CD8-positive, alpha-beta T cell (primary cell): ENCODE measurements at regions of chr13 and their contacts with region 1.

Region 1: GRCh38 chr13:23375001-23375971 is 58.2 kb downstream of the SACS start:
- DNase-seq: peak; percentile 95 to 99 (median 97)
- ATAC-seq: peak; percentile 87
- H3K4me3 ChIP-seq: peak overlapping the region; percentile 52 to 69
- H3K4me3 Mint-ChIP-seq: peak overlapping the region; percentile 81
- H3K27ac ChIP-seq: peak overlapping the region; percentile 42 to 68
- H3K27ac Mint-ChIP-seq: peak overlapping the region; percentile 58
- H3K4me1 ChIP-seq: peaks cover 37% of the 10 kb centered on the region
- H3K4me1 Mint-ChIP-seq: peaks cover 57% of the 10 kb centered on the region
- H3K27me3 ChIP-seq: no peaks in the 10 kb centered on the region
- H3K27me3 Mint-ChIP-seq: no peaks in the 10 kb centered on the region
- CTCF ChIP-seq: peak; percentile 37

Region 2: GRCh38 chr13:21458813-21459701 is 1916.2 kb before region 1 on chr13 and contains the start of gene ZDHHC20:
- CTCF ChIA-PET with region 1: no interaction called
- POLR2A ChIA-PET with region 1: no interaction called
- intact Hi-C with region 1: loop called in 1 of 2 experiments (anchors 5 kb)
- DNase-seq: peak; percentile 77 to 96 (median 90)
- ATAC-seq: peak; percentile 93
- H3K4me3 ChIP-seq: peak within 1 kb of the TSS; percentile 69 to 78
- H3K4me3 Mint-ChIP-seq: peak within 1 kb of the TSS; percentile 95
- H3K27ac ChIP-seq: peak within 1 kb of the TSS; percentile 80 to 89
- H3K27ac Mint-ChIP-seq: peak within 1 kb of the TSS; percentile 96
- H3K4me1 ChIP-seq: peaks cover 15% of the 10 kb centered on the region
- H3K4me1 Mint-ChIP-seq: peaks cover 45% of the 10 kb centered on the region
- H3K27me3 ChIP-seq: no peaks in the 10 kb centered on the region
- H3K27me3 Mint-ChIP-seq: no peaks in the 10 kb centered on the region
- CTCF ChIP-seq: no peak
- total RNA-seq, gene ZDHHC20: 81.0 to 81.1 TPM

Region 3: GRCh38 chr13:23466144-23467002 is 91.1 kb after region 1 on chr13:
- CTCF ChIA-PET with region 1: no interaction called
- POLR2A ChIA-PET with region 1: no interaction called
- intact Hi-C with region 1: loop called in 1 of 2 experiments (anchors 5 kb)
- DNase-seq: peak; percentile 26 to 77 (median 55)
- ATAC-seq: peak; percentile 85
- H3K4me3 ChIP-seq: peak overlapping the region; percentile 49 to 53
- H3K4me3 Mint-ChIP-seq: peak overlapping the region; percentile 82
- H3K27ac ChIP-seq: no peak overlapping the region
- H3K27ac Mint-ChIP-seq: peak overlapping the region; percentile 11
- H3K4me1 ChIP-seq: no peaks in the 10 kb centered on the region
- H3K4me1 Mint-ChIP-seq: peaks cover 5% of the 10 kb centered on the region
- H3K27me3 ChIP-seq: no peaks in the 10 kb centered on the region
- H3K27me3 Mint-ChIP-seq: peaks cover 13% of the 10 kb centered on the region
- CTCF ChIP-seq: peak; percentile 42

Region 4: DNA sequence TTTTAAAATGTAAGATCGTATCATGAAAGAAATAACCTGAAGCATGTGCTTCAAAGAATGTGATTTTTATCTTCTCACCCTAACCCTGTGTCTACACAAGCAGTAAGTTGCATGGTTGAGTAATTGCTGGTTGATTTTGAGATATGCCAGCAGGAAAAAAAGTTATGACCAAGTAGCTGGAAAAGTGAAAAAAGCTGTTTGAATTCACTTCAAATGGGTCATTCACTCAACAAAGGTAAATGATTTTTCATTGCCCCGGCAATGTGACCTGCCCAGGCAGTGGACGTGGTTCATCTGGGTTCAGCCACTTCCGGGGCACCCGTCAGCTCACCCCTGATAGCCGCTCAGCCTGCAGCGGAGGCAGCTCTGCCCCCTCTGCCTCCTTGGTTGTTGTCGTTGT is 213.4 kb after region 1 on chr13:
- CTCF ChIA-PET with region 1: no interaction called
- POLR2A ChIA-PET with region 1: no interaction called
- intact Hi-C with region 1: no loop called
- DNase-seq: no peak
- ATAC-seq: no peak
- H3K4me3 ChIP-seq: no peak overlapping the region
- H3K4me3 Mint-ChIP-seq: no peak overlapping the region
- H3K27ac ChIP-seq: no peak overlapping the region
- H3K27ac Mint-ChIP-seq: no peak overlapping the region
- H3K4me1 ChIP-seq: no peaks in the 10 kb centered on the region
- H3K4me1 Mint-ChIP-seq: no peaks in the 10 kb centered on the region
- H3K27me3 ChIP-seq: peaks cover 0 to 2% of the 10 kb centered on the region in 2 experiments
- H3K27me3 Mint-ChIP-seq: peaks cover 20% of the 10 kb centered on the region
- CTCF ChIP-seq: no peak

Region 5: DNA sequence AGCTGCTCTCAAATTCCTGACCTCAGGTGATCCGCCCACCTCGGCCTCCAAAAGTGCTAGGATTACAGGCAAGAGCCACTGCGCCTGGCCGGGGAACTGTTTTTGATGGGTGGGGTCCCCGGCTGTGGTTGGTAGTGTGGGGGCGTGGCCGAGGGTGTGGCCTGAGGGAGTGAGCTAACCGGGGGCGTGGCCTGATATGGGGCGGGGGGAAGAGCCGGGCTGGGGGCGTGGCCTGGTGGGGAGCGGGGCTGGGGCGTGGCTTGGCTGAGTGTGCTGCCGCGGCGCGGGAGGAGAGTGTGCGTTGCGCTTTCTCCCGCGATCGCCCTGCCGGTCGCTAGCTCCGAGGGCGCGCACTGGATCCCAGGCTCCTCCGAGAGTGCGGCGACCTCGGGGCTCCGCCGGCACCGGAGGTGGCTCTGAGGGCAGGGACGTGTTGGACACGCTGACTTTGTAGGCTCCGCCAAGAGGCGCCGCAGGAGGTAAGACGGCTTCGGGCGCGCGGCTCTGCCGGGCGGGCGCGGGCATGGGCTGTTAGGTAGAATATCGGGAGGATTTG is 785.2 kb after region 1 on chr13 and contains the start of gene SPATA13:
- CTCF ChIA-PET with region 1: no interaction called
- POLR2A ChIA-PET with region 1: no interaction called
- intact Hi-C with region 1: loop called (anchors 1 to 2 kb)
- DNase-seq: peak; percentile 87 to 97 (median 94)
- ATAC-seq: peak; percentile 96
- H3K4me3 ChIP-seq: peak within 1 kb of the TSS; percentile 87 to 89
- H3K4me3 Mint-ChIP-seq: peak within 1 kb of the TSS; percentile 87
- H3K27ac ChIP-seq: peak within 1 kb of the TSS; percentile 29 to 56
- H3K27ac Mint-ChIP-seq: peak within 1 kb of the TSS; percentile 72
- H3K4me1 ChIP-seq: peaks cover 16% of the 10 kb centered on the region
- H3K4me1 Mint-ChIP-seq: peaks cover 26% of the 10 kb centered on the region
- H3K27me3 ChIP-seq: no peaks in the 10 kb centered on the region
- H3K27me3 Mint-ChIP-seq: no peaks in the 10 kb centered on the region
- CTCF ChIP-seq: no peak
- total RNA-seq, gene SPATA13: 102 to 106 TPM

Region 6: DNA sequence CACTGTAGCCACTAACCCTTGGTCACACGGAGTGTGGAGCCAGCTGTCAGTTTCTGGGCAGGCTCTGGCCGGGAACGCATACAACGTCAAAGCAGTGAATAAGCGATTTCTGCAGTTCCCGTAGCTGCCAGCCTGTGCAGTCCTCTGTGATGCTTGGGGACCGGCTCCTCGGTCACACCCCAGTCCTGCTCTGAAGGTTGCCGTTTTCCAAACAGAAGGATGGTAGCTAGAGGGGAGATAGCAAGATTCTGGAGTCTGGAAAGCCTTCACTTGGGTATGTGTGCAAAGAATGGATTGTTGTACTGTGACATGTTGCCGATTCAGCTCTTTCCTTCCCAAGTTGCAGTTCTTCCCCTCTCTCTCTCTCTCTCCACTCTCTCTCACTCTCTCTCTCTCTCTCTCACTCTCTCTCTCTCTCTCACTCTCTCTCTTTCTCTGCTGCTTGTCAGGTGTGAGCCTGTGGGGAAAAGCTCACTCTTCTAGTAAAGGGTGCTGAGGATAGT is 895.4 kb after region 1 on chr13:
- CTCF ChIA-PET with region 1: no interaction called
- POLR2A ChIA-PET with region 1: no interaction called
- intact Hi-C with region 1: loop called (anchors 5 to 10 kb)
- DNase-seq: peak in 8 of 9 experiments; percentile 40 to 86 (median 68)
- ATAC-seq: peak; percentile 32
- H3K4me3 ChIP-seq: peak overlapping the region; percentile 32 to 54
- H3K4me3 Mint-ChIP-seq: peak overlapping the region; percentile 85
- H3K27ac ChIP-seq: peak overlapping the region; percentile 81 to 94
- H3K27ac Mint-ChIP-seq: peak overlapping the region; percentile 99
- H3K4me1 ChIP-seq: peaks cover 91% of the 10 kb centered on the region
- H3K4me1 Mint-ChIP-seq: peaks cover 94% of the 10 kb centered on the region
- H3K27me3 ChIP-seq: no peaks in the 10 kb centered on the region
- H3K27me3 Mint-ChIP-seq: no peaks in the 10 kb centered on the region
- CTCF ChIP-seq: no peak

Region 7: GRCh38 chr13:25301347-25302047 is 1926.2 kb after region 1 on chr13 and contains the start of gene NUP58:
- CTCF ChIA-PET with region 1: no interaction called
- POLR2A ChIA-PET with region 1: no interaction called
- intact Hi-C with region 1: loop called (anchors 5 to 10 kb)
- DNase-seq: peak; percentile 83 to 98 (median 93)
- ATAC-seq: peak; percentile 99
- H3K4me3 ChIP-seq: peak within 1 kb of the TSS; percentile 81 to 84
- H3K4me3 Mint-ChIP-seq: peak within 1 kb of the TSS; percentile 95
- H3K27ac ChIP-seq: peak within 1 kb of the TSS; percentile 83 to 92
- H3K27ac Mint-ChIP-seq: peak within 1 kb of the TSS; percentile 94
- H3K4me1 ChIP-seq: peaks cover 18% of the 10 kb centered on the region
- H3K4me1 Mint-ChIP-seq: peaks cover 46% of the 10 kb centered on the region
- H3K27me3 ChIP-seq: peaks cover 0 to 5% of the 10 kb centered on the region in 2 experiments
- H3K27me3 Mint-ChIP-seq: peaks cover 8% of the 10 kb centered on the region
- CTCF ChIP-seq: no peak
- total RNA-seq, gene NUP58: 73.2 to 78.9 TPM